GM12878 (cell line): ENCODE measurements at regions of chr17 and their contacts with region 1.

Region 1: DNA sequence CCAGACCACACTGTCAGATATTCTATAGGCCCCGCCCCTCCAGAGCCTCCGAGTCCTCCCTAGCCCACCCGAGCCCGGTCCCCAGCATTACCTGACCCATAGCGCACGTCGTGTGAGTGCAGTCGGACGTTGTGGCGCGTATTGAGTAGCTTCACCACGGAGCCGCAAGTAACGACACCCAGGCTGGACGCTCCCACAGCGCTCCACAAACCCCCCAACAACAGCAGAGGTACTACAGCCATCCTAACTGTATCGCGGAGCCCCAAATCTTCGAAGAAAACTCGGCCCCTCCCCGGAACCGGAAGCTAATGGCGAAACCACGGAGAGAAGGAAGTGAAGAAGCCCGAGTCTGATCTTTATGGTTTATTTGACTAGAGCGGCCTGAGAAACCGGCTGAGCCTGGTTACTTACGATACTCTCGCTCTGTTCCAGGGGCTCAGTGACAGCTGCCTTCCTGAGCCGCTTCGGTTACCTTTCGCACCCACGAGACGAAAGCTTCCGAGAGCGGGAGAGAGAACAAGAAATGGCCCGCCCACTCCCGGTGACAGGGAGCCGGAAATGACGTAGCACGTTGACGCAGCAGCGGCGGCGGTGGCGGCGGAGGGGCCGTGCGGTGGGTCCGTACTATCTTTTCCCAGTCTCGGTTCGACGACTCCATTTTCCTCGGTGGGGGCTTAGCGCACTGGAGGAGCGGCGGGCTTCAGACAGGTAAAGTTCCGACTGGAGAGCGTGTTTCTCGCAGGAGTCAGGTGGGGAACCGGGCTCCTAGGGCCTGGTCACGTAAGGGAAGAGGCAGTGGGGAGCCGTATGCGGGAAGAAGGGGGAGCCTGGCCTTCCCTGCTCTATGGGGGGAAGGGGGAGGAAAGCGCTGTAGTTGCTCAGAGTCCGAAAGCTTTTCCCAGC is at the starts of genes SDF2 and SUPT6H:
- DNase-seq: peak; percentile 72
- ATAC-seq: peak; percentile 89
- H3K4me3 ChIP-seq: peak within 1 kb of the TSS; percentile 98
- H3K27ac ChIP-seq: peak within 1 kb of the TSS; percentile 100
- H3K4me1 ChIP-seq: peaks cover 3% of the 10 kb centered on the region; the same call in 1 of the 2 replicates
- H3K27me3 ChIP-seq: no peaks in the 10 kb centered on the region
- CTCF ChIP-seq: 0 out of 6 replicates have a peak, but pooled peaks of 1 of the 3 experiments have one; percentile 16
- EP300 ChIP-seq: peak in 1 of 2 experiments; percentile 17; a peak in 1 of 4 replicates
- POLR2A ChIP-seq: peak; percentile 83
- RAD21 ChIP-seq: no peak
- polyA plus RNA-seq, gene SDF2: 72.7 to 81.0 TPM
- polyA plus RNA-seq, gene SUPT6H: 1.7 to 2.4 TPM

Region 2: GRCh38 chr17:28675980-28676379 is 14.1 kb after region 1 on chr17:
- CTCF ChIA-PET with region 1: interaction called, 18 read pairs
- POLR2A ChIA-PET with region 1: interaction called, 4 read pairs
- RAD21 ChIA-PET with region 1: interaction called, 6 read pairs
- SMC1A ChIA-PET with region 1: no interaction called
- in situ Hi-C with region 1: no loop called
- intact Hi-C with region 1: no loop called
- DNase-seq: no peak
- ATAC-seq: peak; percentile 65
- H3K4me3 ChIP-seq: no peak overlapping the region
- H3K27ac ChIP-seq: no peak overlapping the region
- H3K4me1 ChIP-seq: no peaks in the 10 kb centered on the region
- H3K27me3 ChIP-seq: no peaks in the 10 kb centered on the region
- CTCF ChIP-seq: peak; percentile 45 to 56 (median 49)
- EP300 ChIP-seq: no peak
- POLR2A ChIP-seq: no peak
- RAD21 ChIP-seq: peak; percentile 56

Region 3: DNA sequence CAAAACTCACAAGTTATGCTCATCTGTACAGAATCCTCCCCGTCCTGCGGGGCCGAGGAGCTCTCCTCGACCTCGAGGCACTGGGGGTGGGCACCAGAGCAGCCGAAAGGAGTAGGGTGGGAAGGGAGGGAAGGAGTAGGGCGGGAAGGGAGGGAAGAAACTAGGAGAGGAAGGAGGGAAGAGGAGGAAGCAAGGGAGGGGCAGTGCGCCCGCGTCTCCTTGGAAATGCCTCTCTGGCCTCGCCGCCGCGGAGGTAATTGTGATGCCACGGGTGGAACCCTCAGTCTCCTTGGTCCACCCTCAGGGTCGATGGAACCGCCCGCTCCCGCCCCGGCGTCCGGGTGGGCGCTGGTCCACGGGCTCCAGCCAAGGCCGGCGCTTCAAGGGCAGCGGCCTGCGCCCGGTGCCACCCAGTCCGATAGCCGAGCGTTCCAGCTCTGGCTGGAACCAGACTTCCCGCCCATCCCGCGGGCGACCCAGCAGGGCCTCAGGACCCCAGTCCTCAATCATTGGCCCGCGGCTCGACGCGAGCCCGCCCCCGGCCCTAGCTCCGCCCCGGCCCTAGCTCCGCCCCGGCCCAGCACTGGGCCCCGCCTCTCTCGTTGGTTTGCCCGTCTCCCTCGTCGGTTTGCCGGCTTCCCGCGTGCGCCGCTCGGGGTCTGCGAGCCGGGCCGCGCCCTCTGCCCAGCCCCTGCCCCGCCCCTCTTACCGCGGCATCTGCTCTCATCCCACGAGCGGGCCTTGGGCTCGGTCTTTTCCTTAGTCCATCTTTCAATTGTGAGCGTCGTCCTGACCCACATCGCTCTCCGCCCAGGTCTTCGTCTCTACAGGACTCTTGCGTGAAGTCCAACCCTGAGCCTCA is 49.2 kb after region 1 on chr17:
- CTCF ChIA-PET with region 1: interaction called, 3 read pairs
- POLR2A ChIA-PET with region 1: interaction called, 10 read pairs
- RAD21 ChIA-PET with region 1: interaction called, 5 read pairs
- SMC1A ChIA-PET with region 1: interaction called, 5 read pairs
- in situ Hi-C with region 1: no loop called
- intact Hi-C with region 1: loop called (anchors 5 kb)
- DNase-seq: peak; percentile 50
- ATAC-seq: peak; percentile 94
- H3K4me3 ChIP-seq: peak overlapping the region; percentile 73
- H3K27ac ChIP-seq: peak overlapping the region; percentile 61
- H3K4me1 ChIP-seq: peaks cover 9% of the 10 kb centered on the region
- H3K27me3 ChIP-seq: no peaks in the 10 kb centered on the region
- CTCF ChIP-seq: no peak
- EP300 ChIP-seq: no peak
- POLR2A ChIP-seq: peak; percentile 62; the same call in 1 of the 2 replicates
- RAD21 ChIP-seq: no peak

Region 4: GRCh38 chr17:28717578-28718333 is 55.9 kb after region 1 on chr17 and contains the start of gene RAB34:
- CTCF ChIA-PET with region 1: interaction called, 8 read pairs
- POLR2A ChIA-PET with region 1: interaction called, 25 read pairs
- RAD21 ChIA-PET with region 1: interaction called, 6 read pairs
- SMC1A ChIA-PET with region 1: interaction called, 3 read pairs
- in situ Hi-C with region 1: no loop called
- intact Hi-C with region 1: loop called (anchors 5 kb)
- DNase-seq: no peak
- ATAC-seq: peak; percentile 31
- H3K4me3 ChIP-seq: peak within 1 kb of the TSS; percentile 55
- H3K27ac ChIP-seq: peak within 1 kb of the TSS; percentile 39
- H3K4me1 ChIP-seq: peaks cover 11% of the 10 kb centered on the region
- H3K27me3 ChIP-seq: no peaks in the 10 kb centered on the region
- CTCF ChIP-seq: peak in 2 of 3 experiments; percentile 15 to 32; a peak in 2 of 6 replicates
- EP300 ChIP-seq: no peak
- POLR2A ChIP-seq: peak; percentile 11; the same call in 1 of the 2 replicates
- RAD21 ChIP-seq: no peak
- polyA plus RNA-seq, gene RAB34: 14.4 to 32.6 TPM

Region 5: DNA sequence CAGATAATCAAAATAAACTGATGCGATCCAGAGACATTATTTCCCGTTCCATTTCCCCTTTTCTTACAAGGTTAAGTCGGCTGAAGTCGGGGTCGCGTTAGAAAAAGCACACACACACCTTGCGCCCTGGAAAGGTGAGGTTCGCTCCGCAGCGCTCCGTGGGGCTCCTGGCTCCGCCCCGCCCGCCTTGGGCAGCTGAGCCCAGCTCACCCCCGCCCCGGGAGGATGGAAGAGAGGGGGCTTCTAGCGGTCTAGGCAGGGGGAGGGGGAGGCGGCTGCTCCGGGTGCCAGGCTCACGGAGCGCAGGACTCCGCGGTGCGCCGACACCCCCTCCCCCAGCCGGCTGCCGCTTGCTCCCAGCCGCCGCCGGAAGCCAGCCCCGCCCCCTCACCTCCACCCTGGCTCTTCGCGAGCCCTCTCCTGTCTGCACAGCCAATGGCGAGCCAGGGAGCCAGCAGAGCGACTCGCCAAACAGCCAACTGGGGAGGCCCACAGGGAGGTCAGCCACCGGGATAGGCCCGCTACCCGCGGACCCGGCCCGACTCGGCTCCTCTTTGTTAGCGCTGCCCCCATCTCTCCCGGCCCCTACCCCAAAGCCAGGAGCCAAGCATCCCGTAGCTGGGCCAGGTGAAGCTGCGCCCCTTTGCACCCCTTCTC is 150.3 kb after region 1 on chr17:
- CTCF ChIA-PET with region 1: no interaction called
- POLR2A ChIA-PET with region 1: no interaction called
- RAD21 ChIA-PET with region 1: no interaction called
- SMC1A ChIA-PET with region 1: no interaction called
- in situ Hi-C with region 1: no loop called
- intact Hi-C with region 1: no loop called
- DNase-seq: peak; percentile 78
- ATAC-seq: peak; percentile 100
- H3K4me3 ChIP-seq: peak overlapping the region; percentile 75
- H3K27ac ChIP-seq: peak overlapping the region; percentile 74
- H3K4me1 ChIP-seq: peaks cover 18% of the 10 kb centered on the region
- H3K27me3 ChIP-seq: no peaks in the 10 kb centered on the region
- CTCF ChIP-seq: no peak
- EP300 ChIP-seq: no peak
- POLR2A ChIP-seq: peak; percentile 70; the same call in 1 of the 2 replicates
- RAD21 ChIP-seq: no peak

Region 6: GRCh38 chr17:29420128-29420527 is 758.2 kb after region 1 on chr17:
- CTCF ChIA-PET with region 1: no interaction called
- POLR2A ChIA-PET with region 1: no interaction called
- RAD21 ChIA-PET with region 1: no interaction called
- SMC1A ChIA-PET with region 1: no interaction called
- in situ Hi-C with region 1: no loop called
- intact Hi-C with region 1: no loop called
- DNase-seq: no peak
- ATAC-seq: no peak
- H3K4me3 ChIP-seq: no peak overlapping the region
- H3K27ac ChIP-seq: no peak overlapping the region
- H3K4me1 ChIP-seq: no peaks in the 10 kb centered on the region
- H3K27me3 ChIP-seq: no peaks in the 10 kb centered on the region
- CTCF ChIP-seq: no peak
- EP300 ChIP-seq: no peak
- POLR2A ChIP-seq: no peak
- RAD21 ChIP-seq: no peak